ENCODE measurements at regions of chr11 and their contacts with region 1.

Region 1: GRCh38 chr11:67239783-67240575 is 26.3 kb upstream of the GRK2 start:
- DNase-seq: peak; percentile 99 to 100
- H3K4me3 ChIP-seq: peak overlapping the region; percentile 58
- H3K4me1 ChIP-seq: peaks cover 17% of the 10 kb centered on the region
- H3K27me3 ChIP-seq: no peaks in the 10 kb centered on the region

Region 2: DNA sequence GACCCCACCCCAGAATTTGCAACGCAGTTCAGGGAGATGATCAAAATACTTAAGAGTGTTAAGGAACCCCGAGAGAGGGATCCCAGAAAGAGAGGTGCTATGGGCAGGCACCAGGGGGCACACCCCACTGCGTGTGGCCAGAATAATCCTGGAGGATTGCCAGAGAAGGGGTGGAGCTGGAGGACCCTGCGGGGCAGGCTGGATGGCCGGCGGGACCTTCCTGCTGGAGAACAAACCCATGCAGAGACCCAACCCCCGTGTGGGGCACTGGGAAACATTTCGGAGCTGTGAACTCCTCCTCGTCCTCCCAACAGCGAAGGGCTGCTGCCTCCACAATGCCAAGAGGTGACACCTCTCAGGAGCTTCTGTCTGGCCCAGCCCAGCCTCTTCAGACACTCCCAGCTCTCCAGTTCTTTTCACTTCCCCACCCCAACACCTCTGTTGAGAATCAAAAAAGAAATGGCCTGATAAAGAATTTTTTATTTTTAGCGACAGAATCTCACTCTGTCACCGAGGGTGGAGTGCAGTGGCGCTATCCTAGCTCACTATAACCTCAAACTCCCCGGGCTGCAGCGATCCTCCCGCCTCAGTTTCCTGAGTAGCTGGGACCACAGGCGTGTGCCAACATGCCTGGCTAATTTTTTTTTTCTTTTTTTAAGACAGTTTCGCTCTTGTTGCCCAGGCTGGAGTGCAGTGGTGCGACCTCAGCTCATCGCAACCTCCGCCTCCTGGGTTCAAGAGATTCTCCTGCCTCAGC is 157.8 kb before region 1 on chr11:
- in situ Hi-C with region 1: loop called (anchors 10 kb)
- DNase-seq: peak in 1 of 2 experiments; percentile 55
- H3K4me3 ChIP-seq: no peak overlapping the region
- H3K4me1 ChIP-seq: peaks cover 5% of the 10 kb centered on the region; the same call in 1 of the 2 replicates
- H3K27me3 ChIP-seq: no peaks in the 10 kb centered on the region

Measured in HAP-1 (cell line).